ENCODE measurements at regions of chr18 and their contacts with region 1.

Region 1: DNA sequence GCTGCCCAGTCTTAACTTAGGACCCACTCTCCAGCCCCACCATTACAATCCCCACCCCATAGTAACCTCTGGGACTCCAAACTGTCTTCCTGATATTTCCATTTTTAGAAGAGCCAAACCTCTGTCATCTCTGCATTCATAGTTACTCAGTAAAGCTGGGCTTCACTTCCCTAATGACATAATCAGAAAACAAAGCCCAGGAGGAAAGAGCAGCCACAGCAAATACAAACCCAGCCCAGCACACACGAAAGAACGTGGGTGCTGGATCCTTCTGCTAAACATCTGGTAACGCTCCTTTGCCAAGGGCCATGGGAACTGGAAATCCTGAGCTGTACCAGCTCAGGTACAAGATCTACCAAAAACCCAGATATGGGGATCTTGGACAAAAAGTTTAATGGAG is 36.8 kb upstream of the RIOK3 start:
- DNase-seq: no peak
- H3K4me3 Mint-ChIP-seq: no peak overlapping the region
- H3K27ac Mint-ChIP-seq: no peak overlapping the region
- H3K4me1 Mint-ChIP-seq: no peaks in the 10 kb centered on the region
- H3K27me3 Mint-ChIP-seq: no peaks in the 10 kb centered on the region

Region 2: DNA sequence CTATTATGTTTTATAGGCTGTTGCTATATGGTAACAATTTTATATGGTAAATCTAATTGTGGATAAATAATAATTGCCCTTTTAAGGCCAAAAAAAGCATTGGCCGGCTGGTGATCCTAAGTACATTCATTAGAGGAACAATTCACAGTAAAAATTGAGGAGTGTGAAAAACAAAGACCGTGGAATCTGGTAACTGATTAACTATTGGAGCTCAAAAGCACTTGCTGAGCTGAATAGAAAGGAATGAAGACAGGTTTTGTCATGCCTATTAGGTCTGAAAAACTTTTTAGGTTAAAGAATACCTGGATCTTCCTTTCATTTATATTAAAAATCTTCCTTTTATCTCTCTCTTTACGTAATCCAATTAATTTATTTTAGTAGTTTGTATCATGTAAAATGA is 501.7 kb before region 1 on chr18:
- CTCF ChIA-PET with region 1: no interaction called
- POLR2A ChIA-PET with region 1: interaction called, 12 read pairs
- DNase-seq: no peak
- H3K4me3 Mint-ChIP-seq: no peak overlapping the region
- H3K27ac Mint-ChIP-seq: no peak overlapping the region
- H3K4me1 Mint-ChIP-seq: no peaks in the 10 kb centered on the region
- H3K27me3 Mint-ChIP-seq: peaks cover 2% of the 10 kb centered on the region

Region 3: GRCh38 chr18:23433360-23433759 is 17.1 kb after region 1 on chr18:
- CTCF ChIA-PET with region 1: no interaction called
- POLR2A ChIA-PET with region 1: no interaction called
- DNase-seq: no peak
- H3K4me3 Mint-ChIP-seq: no peak overlapping the region
- H3K27ac Mint-ChIP-seq: no peak overlapping the region
- H3K4me1 Mint-ChIP-seq: peaks cover 13% of the 10 kb centered on the region
- H3K27me3 Mint-ChIP-seq: no peaks in the 10 kb centered on the region